Adrenal gland (tissue), 19 donors: ENCODE measurements at regions of chr3 and their contacts with region 1.

Region 1: GRCh38 chr3:77038468-77038929 is 1.4 kb upstream of the ROBO2 start:
- DNase-seq: peak; percentile 51 to 90 (median 67)
- H3K4me3 ChIP-seq: no peak overlapping the region
- H3K27ac ChIP-seq: no peak overlapping the region
- H3K4me1 ChIP-seq: peaks cover 0 to 5% of the 10 kb centered on the region in 2 donors
- H3K27me3 ChIP-seq: peaks cover 30% of the 10 kb centered on the region
- CTCF ChIP-seq: peak; percentile 41 to 78 (median 64)
- POLR2A ChIP-seq: no peak

Region 2: GRCh38 chr3:77142578-77142977 is 104.1 kb after region 1 on chr3:
- intact Hi-C with region 1: no loop called
- DNase-seq: no peak
- H3K4me3 ChIP-seq: no peak overlapping the region
- H3K27ac ChIP-seq: no peak overlapping the region
- H3K4me1 ChIP-seq: no peaks in the 10 kb centered on the region
- H3K27me3 ChIP-seq: no peaks in the 10 kb centered on the region
- CTCF ChIP-seq: no peak
- POLR2A ChIP-seq: no peak

Region 3: GRCh38 chr3:77254967-77255831 is 216.7 kb after region 1 on chr3:
- intact Hi-C with region 1: loop called (anchors 5 kb)
- DNase-seq: peak in 5 of 7 donors; percentile 30 to 60 (median 49)
- H3K4me3 ChIP-seq: no peak overlapping the region
- H3K27ac ChIP-seq: no peak overlapping the region
- H3K4me1 ChIP-seq: no peaks in the 10 kb centered on the region
- H3K27me3 ChIP-seq: no peaks in the 10 kb centered on the region
- CTCF ChIP-seq: peak; percentile 62 to 72 (median 66)
- POLR2A ChIP-seq: no peak